ENCODE measurements at regions of chr10 and their contacts with region 1.

Region 1: DNA sequence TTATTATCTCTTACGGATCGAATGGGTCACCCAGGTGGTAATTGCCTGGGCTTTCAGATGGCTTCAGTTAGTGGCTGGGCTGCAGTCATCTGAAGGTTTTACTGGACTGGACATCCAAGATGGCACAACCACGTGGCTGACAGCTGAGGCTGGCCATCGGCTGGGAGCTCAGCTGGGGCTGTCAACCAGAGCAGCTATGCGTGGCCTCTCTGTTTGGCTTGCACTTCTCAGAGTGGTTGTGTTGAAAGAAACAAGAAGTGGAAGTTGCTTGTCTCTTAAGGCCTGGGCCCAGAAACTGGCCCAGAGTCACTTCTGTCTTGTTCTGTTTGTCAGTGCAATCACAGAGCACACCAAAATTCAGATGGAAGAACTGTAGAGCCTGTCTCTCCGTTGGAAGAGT is 5.7 kb upstream of the GDI2 start:
- DNase-seq: no peak
- H3K4me3 Mint-ChIP-seq: no peak overlapping the region
- H3K27ac Mint-ChIP-seq: no peak overlapping the region
- H3K4me1 Mint-ChIP-seq: peaks cover 51% of the 10 kb centered on the region
- H3K27me3 Mint-ChIP-seq: no peaks in the 10 kb centered on the region

Region 2: DNA sequence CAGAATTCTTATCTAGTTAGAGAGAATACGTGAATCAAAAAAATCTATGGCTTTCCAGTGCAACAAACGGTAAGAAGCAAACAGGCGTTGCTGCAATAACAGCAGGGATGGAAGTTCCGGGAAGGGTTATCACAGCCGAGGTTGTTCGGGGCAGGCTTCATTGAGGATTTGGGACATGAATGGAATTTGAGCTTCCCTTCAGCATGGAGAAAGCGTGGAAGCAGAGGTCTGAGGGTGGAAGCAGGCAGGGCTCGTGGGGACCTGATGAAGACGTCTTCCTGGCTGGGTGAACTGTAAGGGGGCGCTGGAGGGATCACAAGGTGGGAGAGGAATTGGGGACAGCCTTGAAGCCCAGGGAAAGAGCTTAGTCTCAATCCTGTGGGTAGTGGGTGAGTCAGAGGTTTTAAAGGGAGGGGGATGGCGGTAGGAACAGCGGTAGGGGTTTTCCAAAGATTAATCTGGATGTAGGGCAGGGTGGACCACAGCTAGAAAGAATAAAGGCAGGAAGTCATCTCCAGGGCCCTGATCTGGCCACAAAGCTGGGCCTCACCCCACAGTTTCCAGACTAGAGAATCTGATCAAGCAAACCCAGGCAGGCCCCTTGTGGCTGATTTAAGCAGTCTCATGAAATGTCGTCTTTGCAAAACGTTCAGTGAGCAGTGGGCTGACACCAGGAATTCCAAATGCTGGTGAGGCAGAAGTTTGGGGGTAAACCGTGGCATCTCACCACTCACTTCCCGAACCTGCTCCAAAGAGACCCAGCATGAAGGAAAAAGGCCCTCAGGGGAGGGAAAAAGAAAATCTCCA is 229.0 kb before region 1 on chr10:
- intact Hi-C with region 1: no loop called
- DNase-seq: no peak
- H3K4me3 Mint-ChIP-seq: no peak overlapping the region
- H3K27ac Mint-ChIP-seq: no peak overlapping the region
- H3K4me1 Mint-ChIP-seq: peaks cover 3% of the 10 kb centered on the region
- H3K27me3 Mint-ChIP-seq: peaks cover 21% of the 10 kb centered on the region

Region 3: DNA sequence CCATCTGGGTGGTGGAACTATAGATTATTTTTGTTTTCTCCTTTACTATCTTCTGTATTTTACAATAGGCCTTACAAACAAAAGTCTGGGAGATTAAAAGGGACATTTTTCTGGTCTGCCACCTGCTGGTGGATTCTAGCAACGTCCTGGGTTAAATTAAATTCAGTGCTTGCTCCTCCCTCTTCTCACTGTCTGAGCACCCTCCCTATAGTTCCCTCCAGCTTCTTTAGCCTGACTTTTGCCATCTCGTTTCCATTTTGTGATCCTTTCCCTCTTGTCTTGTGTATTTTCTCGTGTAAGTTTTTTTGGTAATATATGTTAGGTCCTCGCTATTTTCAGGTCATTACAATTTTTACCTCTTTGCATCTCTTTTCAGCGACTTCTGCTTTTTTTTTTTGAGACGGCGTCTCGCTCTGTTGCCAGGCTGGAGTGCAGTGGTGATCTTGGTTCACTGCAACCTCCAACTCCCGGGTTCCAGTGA is 54.7 kb after region 1 on chr10:
- intact Hi-C with region 1: loop called (anchors 1 kb)
- DNase-seq: peak; percentile 59
- H3K4me3 Mint-ChIP-seq: peak overlapping the region; percentile 43
- H3K27ac Mint-ChIP-seq: no peak overlapping the region
- H3K4me1 Mint-ChIP-seq: peaks cover 6% of the 10 kb centered on the region
- H3K27me3 Mint-ChIP-seq: no peaks in the 10 kb centered on the region

Measured in activated T-helper 1 cell treated with anti-CD3 and anti-CD28 coated beads, Interleukin-12 subunit alpha, Interleukin-12 subunit beta, Interleukin-2, Interleukin-4 antibody, amounts not matched to agents 30 ng/mL and 10 ng/mL and 1 ng/mL, durations not matched to agents 14 hours and 24 hours and 36 hours (primary cell).